ENCODE measurements at regions of chr18 and their contacts with region 1.

Region 1: DNA sequence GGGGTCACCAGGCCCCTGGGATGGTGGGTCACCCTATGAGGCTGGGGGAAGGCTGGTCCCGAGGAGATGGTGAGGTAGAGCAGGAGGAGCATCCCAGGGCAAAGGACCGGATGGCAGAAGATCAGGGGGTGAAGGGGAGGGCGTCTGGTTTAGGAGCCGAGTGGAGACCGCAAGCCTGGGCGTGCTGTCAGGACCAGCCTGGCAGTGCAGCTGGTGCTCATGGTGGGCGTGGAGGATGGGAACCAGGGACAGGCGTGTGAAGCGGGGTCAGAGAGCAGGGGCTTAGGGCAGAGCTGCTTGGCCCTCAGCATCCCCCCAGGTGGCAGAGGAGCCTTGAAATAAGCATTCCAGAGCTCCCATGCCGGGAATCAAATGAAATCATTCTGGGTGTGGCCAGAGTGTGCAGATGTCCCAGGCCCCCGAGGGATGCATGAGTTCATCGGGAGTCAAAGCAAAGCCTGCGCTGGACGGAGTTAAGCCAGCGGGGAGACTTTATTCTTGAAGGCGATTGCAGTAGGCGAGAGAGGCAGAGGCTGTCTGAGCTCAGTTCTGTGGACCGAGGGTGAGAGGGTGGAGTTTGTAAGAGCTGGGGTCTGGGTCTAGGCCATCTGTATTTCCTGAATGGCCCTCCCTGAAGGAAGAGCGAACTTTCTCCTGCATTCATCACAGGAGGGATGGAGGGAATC is 33.1 kb upstream of the MBP start:
- DNase-seq: no peak
- H3K4me3 ChIP-seq: peak overlapping the region in 1 of 3 donors; percentile 11
- H3K27ac ChIP-seq: peak overlapping the region in 1 of 2 donors; percentile 65
- H3K4me1 ChIP-seq: no peaks in the 10 kb centered on the region
- H3K27me3 ChIP-seq: peaks cover 0 to 6% of the 10 kb centered on the region in 2 donors
- CTCF ChIP-seq: no peak
- POLR2A ChIP-seq: no peak

Region 2: GRCh38 chr18:77132371-77133050 is 33.1 kb before region 1 on chr18 and contains the start of gene MBP:
- intact Hi-C with region 1: loop called (anchors 1 kb)
- DNase-seq: peak; percentile 75
- H3K4me3 ChIP-seq: peak within 1 kb of the TSS; percentile 89 to 98 (median 93)
- H3K27ac ChIP-seq: peak within 1 kb of the TSS; percentile 96
- H3K4me1 ChIP-seq: peaks cover 0 to 4% of the 10 kb centered on the region in 2 donors
- H3K27me3 ChIP-seq: no peaks in the 10 kb centered on the region
- CTCF ChIP-seq: no peak
- POLR2A ChIP-seq: no peak
- total RNA-seq, gene MBP: 27.2 to 46.2 (median 32.4) TPM